Activated CD4-positive, alpha-beta T cell treated with anti-CD3 and anti-CD28 coated beads for 36 hours (primary cell): ENCODE measurements at regions of chr3 and their contacts with region 1.

Region 1: DNA sequence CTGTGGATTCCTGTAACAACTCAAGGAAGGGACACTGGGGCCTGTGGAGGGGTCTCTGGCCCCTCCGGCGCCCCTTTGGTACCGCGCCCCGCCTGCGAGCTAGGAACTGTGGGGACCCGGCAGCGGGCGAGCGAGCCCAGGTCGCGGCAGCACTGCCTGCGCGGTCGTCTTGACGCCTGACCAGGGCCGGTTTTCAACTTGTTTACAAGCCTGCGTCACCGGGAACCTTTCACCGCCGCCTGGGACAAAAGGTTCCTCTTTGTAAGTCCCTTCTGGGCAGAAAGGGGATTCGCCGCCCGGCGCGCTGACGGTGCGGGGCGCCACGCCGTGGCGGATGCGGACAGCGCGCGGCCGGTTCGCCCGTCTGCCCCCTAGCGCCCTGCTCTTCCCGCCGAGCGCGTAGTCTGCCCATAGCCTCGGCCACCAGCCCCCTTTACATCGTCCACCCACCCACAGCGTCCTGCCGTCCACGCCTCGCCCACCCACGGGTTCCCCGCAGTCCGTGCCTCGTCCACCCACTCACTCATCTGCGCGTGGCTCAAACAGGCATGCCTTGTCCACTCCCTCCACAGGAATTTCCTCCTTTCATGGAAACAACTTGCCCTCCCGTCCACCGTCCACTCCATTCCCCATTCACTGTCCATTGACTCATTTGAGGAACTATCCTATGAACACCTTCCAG is 5.5 kb upstream of the CFAP100 start:
- DNase-seq: peak; percentile 71
- ATAC-seq: peak; percentile 84
- H3K4me3 Mint-ChIP-seq: no peak overlapping the region
- H3K27ac Mint-ChIP-seq: no peak overlapping the region
- H3K4me1 Mint-ChIP-seq: peaks cover 5% of the 10 kb centered on the region
- H3K27me3 Mint-ChIP-seq: peaks cover 52% of the 10 kb centered on the region

Region 2: DNA sequence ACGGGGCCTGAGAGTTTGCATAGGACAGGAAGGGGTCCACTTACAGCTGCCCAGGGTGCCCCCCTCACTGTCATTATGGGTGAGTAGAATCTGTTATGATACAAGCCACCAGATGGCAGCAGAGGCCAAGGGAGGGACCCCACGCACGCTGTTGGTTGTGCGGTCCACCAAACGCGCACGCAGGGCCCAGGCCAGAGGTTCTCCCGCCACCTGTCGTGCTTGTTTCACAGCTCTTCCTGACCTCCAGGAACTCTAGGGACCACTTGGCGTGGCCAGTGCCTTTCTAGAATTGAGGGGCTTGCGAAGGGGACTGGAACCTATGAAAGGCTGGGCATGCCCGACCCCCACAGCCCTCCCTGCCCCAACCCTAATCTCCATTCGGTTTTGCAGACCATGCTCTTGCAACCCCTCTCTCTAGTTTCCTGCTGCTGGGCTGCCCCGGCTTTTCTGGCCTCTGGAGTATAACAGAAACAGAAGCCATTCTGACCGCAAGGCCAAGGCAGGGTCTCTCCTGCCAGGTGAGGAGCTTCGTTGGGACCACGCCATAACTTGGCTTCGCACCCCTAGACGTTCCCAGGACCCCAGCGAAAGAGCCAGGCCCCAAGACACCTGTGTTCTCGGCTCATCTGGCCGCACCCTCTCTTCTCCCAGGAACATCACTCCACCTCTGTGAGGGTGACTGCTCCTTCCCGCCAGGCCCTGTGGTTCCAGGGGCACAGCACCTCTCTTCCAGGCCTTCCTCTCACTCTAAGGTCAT is 254.9 kb before region 1 on chr3:
- CTCF ChIA-PET with region 1: interaction called, 19 read pairs
- POLR2A ChIA-PET with region 1: no interaction called
- intact Hi-C with region 1: loop called (anchors 1 kb)
- DNase-seq: peak; percentile 76
- ATAC-seq: peak; percentile 71
- H3K4me3 Mint-ChIP-seq: no peak overlapping the region
- H3K27ac Mint-ChIP-seq: no peak overlapping the region
- H3K4me1 Mint-ChIP-seq: no peaks in the 10 kb centered on the region
- H3K27me3 Mint-ChIP-seq: peaks cover 10% of the 10 kb centered on the region

Region 3: GRCh38 chr3:126245811-126246727 is 143.2 kb before region 1 on chr3:
- CTCF ChIA-PET with region 1: no interaction called
- POLR2A ChIA-PET with region 1: no interaction called
- intact Hi-C with region 1: loop called (anchors 1 to 5 kb)
- DNase-seq: peak; percentile 56
- ATAC-seq: no peak
- H3K4me3 Mint-ChIP-seq: no peak overlapping the region
- H3K27ac Mint-ChIP-seq: no peak overlapping the region
- H3K4me1 Mint-ChIP-seq: no peaks in the 10 kb centered on the region
- H3K27me3 Mint-ChIP-seq: peaks cover 6% of the 10 kb centered on the region

Region 4: GRCh38 chr3:126259411-126260391 is 129.6 kb before region 1 on chr3:
- CTCF ChIA-PET with region 1: no interaction called
- POLR2A ChIA-PET with region 1: no interaction called
- intact Hi-C with region 1: loop called in 1 of 2 experiments (anchors 1 kb)
- DNase-seq: peak; percentile 54
- ATAC-seq: no peak
- H3K4me3 Mint-ChIP-seq: no peak overlapping the region
- H3K27ac Mint-ChIP-seq: no peak overlapping the region
- H3K4me1 Mint-ChIP-seq: no peaks in the 10 kb centered on the region
- H3K27me3 Mint-ChIP-seq: peaks cover 4% of the 10 kb centered on the region